ENCODE measurements at regions of chr14 and their contacts with region 1.

Region 1: GRCh38 chr14:23057757-23058653 is 685 bp upstream of the CDH24 start:
- DNase-seq: no peak
- H3K4me3 ChIP-seq: peak overlapping the region; percentile 66 to 86 (median 73)
- H3K27ac ChIP-seq: peak overlapping the region; percentile 78 to 87 (median 85)
- H3K4me1 ChIP-seq: peaks cover 18 to 41% (median 23%) of the 10 kb centered on the region in 3 donors
- H3K27me3 ChIP-seq: no peaks in the 10 kb centered on the region
- CTCF ChIP-seq: peak; percentile 90 to 97 (median 95)
- POLR2A ChIP-seq: no peak

Region 2: GRCh38 chr14:22986508-22987054 is 71.4 kb before region 1 on chr14:
- intact Hi-C with region 1: loop called (anchors 5 kb)
- DNase-seq: peak; percentile 19
- H3K4me3 ChIP-seq: no peak overlapping the region
- H3K27ac ChIP-seq: no peak overlapping the region
- H3K4me1 ChIP-seq: peaks cover 0 to 24% (median 0%) of the 10 kb centered on the region in 3 donors
- H3K27me3 ChIP-seq: peaks cover 0 to 7% (median 0%) of the 10 kb centered on the region in 4 donors
- CTCF ChIP-seq: peak; percentile 83 to 92 (median 91)
- POLR2A ChIP-seq: no peak

Measured in esophagus squamous epithelium (tissue), 5 donors.